Activated CD4-positive, alpha-beta memory T cell treated with anti-CD3 and anti-CD28 coated beads, Interleukin-2, amount 10 ng/mL, durations not matched to agents 7 days and 5 days (primary cell): ENCODE measurements at regions of chr19 and their contacts with region 1.

Region 1: GRCh38 chr19:18322759-18323460 is at the start of gene LSM4:
- DNase-seq: peak; percentile 100
- H3K4me3 Mint-ChIP-seq: peak within 1 kb of the TSS; percentile 91
- H3K27ac Mint-ChIP-seq: peak within 1 kb of the TSS; percentile 96
- H3K4me1 Mint-ChIP-seq: peaks cover 54% of the 10 kb centered on the region
- H3K27me3 Mint-ChIP-seq: no peaks in the 10 kb centered on the region
- total RNA-seq, gene LSM4: 180 to 186 TPM

Region 2: DNA sequence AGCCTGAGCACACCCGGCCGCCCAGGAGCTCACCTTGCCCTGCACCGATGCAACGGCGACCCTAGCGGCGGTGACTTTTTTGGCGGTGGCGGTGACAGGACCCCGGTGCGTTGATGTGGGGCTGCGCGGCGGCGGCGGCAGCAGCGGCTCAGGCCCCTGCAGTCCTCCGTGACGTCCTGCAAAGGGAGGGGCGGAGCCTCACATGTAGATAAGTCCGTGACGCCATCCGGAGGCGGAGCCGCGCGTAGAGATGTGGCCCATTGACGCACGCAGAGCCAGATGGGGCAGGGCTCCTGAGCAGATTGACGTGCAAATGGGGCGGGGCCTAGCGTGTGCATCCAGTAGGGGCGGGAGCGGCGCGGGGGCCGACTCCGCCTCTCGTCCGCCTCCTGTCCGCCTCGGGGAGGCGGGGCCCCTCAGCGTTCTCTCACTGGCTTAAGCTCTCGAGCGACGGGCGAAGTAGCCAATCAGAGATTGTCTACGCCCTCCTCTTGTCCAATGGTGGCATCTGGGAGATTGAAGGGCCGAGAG is 119.0 kb before region 1 on chr19 and contains the start of gene RAB3A:
- CTCF ChIA-PET with region 1: interaction called, 8 read pairs
- POLR2A ChIA-PET with region 1: interaction called, 11 read pairs
- DNase-seq: peak; percentile 100
- H3K4me3 Mint-ChIP-seq: peak within 1 kb of the TSS; percentile 90
- H3K27ac Mint-ChIP-seq: peak within 1 kb of the TSS; percentile 90
- H3K4me1 Mint-ChIP-seq: peaks cover 31% of the 10 kb centered on the region
- H3K27me3 Mint-ChIP-seq: peaks cover 5% of the 10 kb centered on the region
- total RNA-seq, gene RAB3A: 3.7 to 5.3 TPM

Region 3: GRCh38 chr19:18262917-18263316 is 60.0 kb before region 1 on chr19:
- CTCF ChIA-PET with region 1: no interaction called
- POLR2A ChIA-PET with region 1: no interaction called
- DNase-seq: no peak
- H3K4me3 Mint-ChIP-seq: no peak overlapping the region
- H3K27ac Mint-ChIP-seq: no peak overlapping the region
- H3K4me1 Mint-ChIP-seq: peaks cover 5% of the 10 kb centered on the region
- H3K27me3 Mint-ChIP-seq: no peaks in the 10 kb centered on the region

Region 4: GRCh38 chr19:18291590-18292461 is 31.1 kb before region 1 on chr19:
- CTCF ChIA-PET with region 1: interaction called, 10 read pairs
- POLR2A ChIA-PET with region 1: interaction called, 1,184 read pairs
- DNase-seq: peak; percentile 90
- H3K4me3 Mint-ChIP-seq: peak overlapping the region; percentile 96
- H3K27ac Mint-ChIP-seq: peak overlapping the region; percentile 97
- H3K4me1 Mint-ChIP-seq: peaks cover 79% of the 10 kb centered on the region
- H3K27me3 Mint-ChIP-seq: no peaks in the 10 kb centered on the region

Region 5: DNA sequence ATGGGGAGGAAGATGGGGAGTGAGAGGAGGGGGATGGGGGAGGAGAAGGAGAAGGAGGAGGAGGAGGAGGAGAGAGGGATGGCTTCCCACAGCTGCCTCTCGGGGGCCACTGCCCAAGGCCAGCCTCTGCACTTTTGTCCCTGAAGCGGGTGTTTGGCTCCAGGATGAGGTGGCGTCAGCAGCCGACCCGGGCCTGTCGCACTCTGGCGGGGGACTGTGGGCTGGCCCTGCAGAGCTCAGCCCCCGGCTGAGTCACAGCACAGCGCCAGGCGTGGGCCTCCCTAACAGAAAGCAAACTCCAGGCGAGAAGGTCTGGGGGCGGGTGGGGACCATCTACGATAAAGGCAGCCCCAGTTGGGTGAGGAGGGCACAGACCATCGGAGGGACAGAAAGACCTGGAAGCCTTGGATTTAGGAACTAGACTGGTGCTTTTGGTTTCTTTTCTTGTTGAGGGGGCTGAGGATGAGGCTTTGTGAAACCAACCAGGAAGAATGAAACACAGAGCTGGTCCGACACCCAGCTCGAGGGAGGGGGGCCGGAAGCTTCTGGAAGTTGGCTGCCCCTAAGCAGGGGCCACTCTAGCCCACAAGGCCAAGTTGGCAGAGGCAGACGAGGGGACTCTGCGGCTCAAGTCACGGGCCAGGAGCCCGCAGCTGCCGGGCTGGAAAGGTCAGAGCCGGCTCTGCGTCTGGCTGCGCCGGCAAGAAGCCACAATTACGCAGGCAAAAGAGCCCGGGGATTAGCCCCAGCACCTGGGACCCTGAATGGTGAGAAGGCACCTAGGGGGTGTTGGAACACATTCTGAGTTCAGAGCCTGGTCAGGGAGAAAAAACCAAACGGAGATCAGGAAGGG is 18.2 kb before region 1 on chr19:
- CTCF ChIA-PET with region 1: interaction called, 39 read pairs
- POLR2A ChIA-PET with region 1: interaction called, 335 read pairs
- DNase-seq: peak; percentile 86
- H3K4me3 Mint-ChIP-seq: peak overlapping the region; percentile 93
- H3K27ac Mint-ChIP-seq: peak overlapping the region; percentile 94
- H3K4me1 Mint-ChIP-seq: peaks cover 53% of the 10 kb centered on the region
- H3K27me3 Mint-ChIP-seq: no peaks in the 10 kb centered on the region

Region 6: DNA sequence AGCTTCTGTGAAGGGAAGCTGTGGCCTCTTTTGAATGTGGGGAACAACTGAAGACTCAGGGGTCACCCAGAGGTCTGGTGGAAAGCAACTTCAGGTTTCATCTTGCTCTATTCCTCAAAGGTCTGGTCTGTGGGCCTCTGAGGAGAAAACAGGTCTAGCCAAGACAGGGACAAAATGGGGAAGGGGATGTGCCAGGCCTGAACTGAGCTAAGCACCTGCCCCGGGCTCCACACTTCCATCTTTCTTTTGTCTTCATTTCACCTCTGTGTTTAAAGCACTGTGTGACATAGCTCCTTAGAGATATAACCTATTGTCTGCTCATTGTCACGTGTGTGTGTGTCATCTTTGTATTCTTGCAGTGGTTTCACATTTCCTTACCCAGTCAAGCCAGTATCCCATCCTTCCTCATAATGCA is 43.1 kb after region 1 on chr19:
- CTCF ChIA-PET with region 1: no interaction called
- POLR2A ChIA-PET with region 1: no interaction called
- DNase-seq: no peak
- H3K4me3 Mint-ChIP-seq: no peak overlapping the region
- H3K27ac Mint-ChIP-seq: no peak overlapping the region
- H3K4me1 Mint-ChIP-seq: peaks cover 16% of the 10 kb centered on the region
- H3K27me3 Mint-ChIP-seq: no peaks in the 10 kb centered on the region

Region 7: DNA sequence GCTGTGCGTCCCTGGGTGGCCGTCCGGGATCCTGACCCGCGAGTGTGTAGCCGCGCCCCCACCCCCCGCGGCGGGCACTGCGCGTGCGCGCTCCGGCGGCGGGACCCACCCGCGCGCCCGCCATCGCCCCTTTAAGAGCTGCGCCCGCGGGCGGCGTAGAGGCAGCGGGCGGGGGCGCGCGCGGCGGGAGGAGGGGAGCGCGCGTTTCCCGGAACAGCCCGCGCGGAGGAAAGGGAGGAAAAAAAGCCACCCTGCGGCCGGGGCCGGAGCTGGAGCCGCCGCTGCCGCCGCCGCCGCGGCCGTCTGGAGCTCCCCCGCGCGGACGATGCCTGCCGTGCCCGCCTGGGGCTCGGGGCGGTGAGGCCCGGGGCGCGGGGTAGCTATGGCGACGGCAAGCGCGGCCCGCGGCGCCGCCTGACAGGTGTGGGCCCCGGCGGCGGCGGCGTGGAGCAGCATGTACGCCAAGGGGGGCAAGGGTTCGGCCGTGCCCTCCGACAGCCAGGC is 96.3 kb after region 1 on chr19 and contains the start of gene SSBP4:
- CTCF ChIA-PET with region 1: interaction called, 16 read pairs
- POLR2A ChIA-PET with region 1: interaction called, 21 read pairs
- DNase-seq: peak; percentile 79
- H3K4me3 Mint-ChIP-seq: peak within 1 kb of the TSS; percentile 94
- H3K27ac Mint-ChIP-seq: peak within 1 kb of the TSS; percentile 91
- H3K4me1 Mint-ChIP-seq: peaks cover 84% of the 10 kb centered on the region
- H3K27me3 Mint-ChIP-seq: peaks cover 11% of the 10 kb centered on the region
- total RNA-seq, gene SSBP4: 140 to 153 TPM